ENCODE measurements at regions of chr4 and their contacts with region 1.

Region 1: DNA sequence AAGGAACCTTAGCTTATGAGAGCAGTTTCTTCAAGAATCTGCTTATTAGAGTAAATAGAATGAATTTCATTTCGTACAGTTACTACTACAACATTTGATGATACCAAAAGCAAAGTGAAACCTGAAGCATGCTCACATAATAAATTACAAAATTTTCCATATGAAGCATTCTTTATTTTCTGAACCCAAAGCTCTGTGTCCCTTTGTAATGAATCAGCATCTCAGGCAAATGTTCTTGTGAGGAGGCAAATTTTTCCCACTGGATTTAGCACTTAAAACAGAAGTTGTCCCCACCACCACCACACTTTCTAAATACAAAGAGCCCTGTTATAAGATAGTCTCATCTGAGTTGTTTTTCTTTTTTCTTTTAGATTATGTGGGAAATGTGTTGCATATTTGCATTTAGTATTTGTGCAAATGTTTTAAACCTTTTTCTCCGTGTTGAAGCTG is 70.7 kb upstream of the NFKB1 start:
- DNase-seq: peak; percentile 36
- H3K4me3 ChIP-seq: peak overlapping the region; percentile 44 to 99 (median 75)
- H3K27ac ChIP-seq: peak overlapping the region; percentile 98
- H3K4me1 ChIP-seq: peaks cover 12% of the 10 kb centered on the region
- H3K27me3 ChIP-seq: no peaks in the 10 kb centered on the region
- CTCF ChIP-seq: no peak

Region 2: GRCh38 chr4:102255454-102255853 is 175.0 kb before region 1 on chr4:
- CTCF ChIA-PET with region 1: no interaction called
- dilution Hi-C with region 1: no loop called
- in situ Hi-C with region 1: no loop called
- intact Hi-C with region 1: loop called (anchors 1 kb)
- DNase-seq: no peak
- H3K4me3 ChIP-seq: no peak overlapping the region
- H3K27ac ChIP-seq: no peak overlapping the region
- H3K4me1 ChIP-seq: no peaks in the 10 kb centered on the region
- H3K27me3 ChIP-seq: no peaks in the 10 kb centered on the region
- CTCF ChIP-seq: no peak

Region 3: GRCh38 chr4:102299354-102300107 is 131.0 kb before region 1 on chr4:
- CTCF ChIA-PET with region 1: no interaction called
- dilution Hi-C with region 1: no loop called
- in situ Hi-C with region 1: no loop called
- intact Hi-C with region 1: no loop called
- DNase-seq: peak; percentile 11
- H3K4me3 ChIP-seq: no peak overlapping the region
- H3K27ac ChIP-seq: no peak overlapping the region
- H3K4me1 ChIP-seq: no peaks in the 10 kb centered on the region
- H3K27me3 ChIP-seq: no peaks in the 10 kb centered on the region
- CTCF ChIP-seq: peak; percentile 60 to 74

Region 4: GRCh38 chr4:102404431-102405028 is 26.0 kb before region 1 on chr4:
- CTCF ChIA-PET with region 1: interaction called, 24 read pairs
- dilution Hi-C with region 1: no loop called
- in situ Hi-C with region 1: no loop called
- intact Hi-C with region 1: no loop called
- DNase-seq: no peak
- H3K4me3 ChIP-seq: no peak overlapping the region
- H3K27ac ChIP-seq: no peak overlapping the region
- H3K4me1 ChIP-seq: no peaks in the 10 kb centered on the region
- H3K27me3 ChIP-seq: no peaks in the 10 kb centered on the region
- CTCF ChIP-seq: no peak

Region 5: GRCh38 chr4:102789317-102789717 is 358.8 kb after region 1 on chr4:
- CTCF ChIA-PET with region 1: interaction called, 19 read pairs
- dilution Hi-C with region 1: no loop called
- in situ Hi-C with region 1: no loop called
- intact Hi-C with region 1: no loop called
- DNase-seq: peak; percentile 64
- H3K4me3 ChIP-seq: no peak overlapping the region
- H3K27ac ChIP-seq: peak overlapping the region; percentile 33
- H3K4me1 ChIP-seq: no peaks in the 10 kb centered on the region
- H3K27me3 ChIP-seq: no peaks in the 10 kb centered on the region
- CTCF ChIP-seq: no peak

Region 6: GRCh38 chr4:102935716-102936115 is 505.2 kb after region 1 on chr4:
- CTCF ChIA-PET with region 1: no interaction called
- dilution Hi-C with region 1: no loop called
- in situ Hi-C with region 1: no loop called
- intact Hi-C with region 1: no loop called
- DNase-seq: no peak
- H3K4me3 ChIP-seq: no peak overlapping the region
- H3K27ac ChIP-seq: no peak overlapping the region
- H3K4me1 ChIP-seq: no peaks in the 10 kb centered on the region
- H3K27me3 ChIP-seq: peaks cover 2% of the 10 kb centered on the region
- CTCF ChIP-seq: no peak

Region 7: GRCh38 chr4:103008875-103009729 is 578.6 kb after region 1 on chr4:
- CTCF ChIA-PET with region 1: interaction called, 16 read pairs
- dilution Hi-C with region 1: no loop called
- in situ Hi-C with region 1: loop called in 1 of 2 experiments (anchors 10 kb)
- intact Hi-C with region 1: loop called (anchors 1 kb)
- DNase-seq: peak; percentile 56
- H3K4me3 ChIP-seq: no peak overlapping the region
- H3K27ac ChIP-seq: no peak overlapping the region
- H3K4me1 ChIP-seq: peaks cover 15% of the 10 kb centered on the region
- H3K27me3 ChIP-seq: no peaks in the 10 kb centered on the region
- CTCF ChIP-seq: peak; percentile 74 to 75

Region 8: DNA sequence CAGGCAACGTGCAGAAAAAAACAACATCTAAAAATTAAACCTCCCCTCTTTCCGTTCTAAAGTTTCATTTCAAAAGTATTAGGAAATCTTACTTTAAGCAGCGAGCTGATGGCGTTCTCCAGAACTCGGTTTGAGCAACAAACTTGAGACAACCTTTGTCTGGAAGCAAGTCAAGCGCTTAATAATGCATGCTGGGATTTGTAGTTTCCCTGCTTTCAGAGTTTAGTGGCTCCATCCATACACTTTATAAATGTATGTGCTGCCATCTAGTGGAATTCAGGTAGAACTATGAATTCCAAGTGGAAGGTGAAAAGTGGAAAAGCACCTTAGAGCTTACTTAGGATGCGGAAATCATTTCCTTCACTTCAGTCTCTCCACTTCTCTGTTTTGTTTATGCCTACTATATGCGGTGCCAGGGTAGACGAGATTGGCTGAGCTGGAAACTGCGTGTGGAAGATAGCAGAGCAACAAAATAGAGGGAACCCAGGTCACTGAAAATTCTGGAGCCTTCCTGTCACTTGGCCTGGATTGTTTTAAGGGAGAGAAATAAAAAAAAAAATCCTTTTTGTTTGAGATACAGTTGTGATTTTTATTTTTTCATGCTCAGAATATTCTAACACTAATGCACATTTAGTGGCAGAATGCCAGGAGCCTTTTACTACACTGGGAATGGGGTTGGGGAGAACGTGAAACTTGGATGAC is 669.4 kb after region 1 on chr4 and contains the start of gene BDH2:
- CTCF ChIA-PET with region 1: no interaction called
- dilution Hi-C with region 1: no loop called
- in situ Hi-C with region 1: no loop called
- intact Hi-C with region 1: loop called (anchors 5 kb)
- DNase-seq: peak; percentile 91
- H3K4me3 ChIP-seq: peak within 1 kb of the TSS; percentile 48 to 71 (median 55)
- H3K27ac ChIP-seq: peak within 1 kb of the TSS; percentile 54
- H3K4me1 ChIP-seq: no peaks in the 10 kb centered on the region
- H3K27me3 ChIP-seq: no peaks in the 10 kb centered on the region
- CTCF ChIP-seq: peak; percentile 64 to 68
- total RNA-seq, gene BDH2: 20.7 to 23.0 TPM